CD8-positive, alpha-beta T cell (primary cell): ENCODE measurements at regions of chr1 and their contacts with region 1.

Region 1: DNA sequence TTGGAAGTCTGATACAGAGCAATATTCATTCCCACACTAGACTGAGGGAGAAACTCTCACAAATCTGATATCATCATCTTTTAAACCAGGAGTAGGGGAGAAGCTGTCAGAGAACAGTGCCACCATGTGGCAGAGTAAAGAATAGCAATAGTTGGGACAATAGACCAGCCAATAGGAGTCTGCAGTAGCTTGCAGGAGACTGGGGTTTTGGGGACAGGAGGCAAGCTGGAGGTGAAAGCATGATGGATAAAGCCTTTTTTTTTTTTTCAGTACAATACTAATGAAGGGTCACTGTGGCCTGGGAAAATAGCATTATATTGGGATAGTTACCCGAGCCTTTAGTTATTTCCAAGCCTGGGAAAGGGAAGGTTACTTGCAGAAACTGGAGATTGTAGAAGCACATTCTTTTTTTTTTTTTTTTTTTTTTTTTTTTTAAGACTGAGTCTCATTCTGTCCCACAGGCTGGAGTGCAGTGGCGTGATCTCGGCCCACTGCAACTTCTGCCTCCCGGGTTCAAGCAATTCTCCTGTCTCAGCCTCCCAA is 120.7 kb downstream of the S1PR1 start:
- DNase-seq: peak; percentile 38 to 92 (median 67)
- ATAC-seq: peak; percentile 100
- H3K4me3 ChIP-seq: no peak overlapping the region
- H3K4me3 Mint-ChIP-seq: no peak overlapping the region
- H3K27ac ChIP-seq: no peak overlapping the region
- H3K27ac Mint-ChIP-seq: peak overlapping the region; percentile 28
- H3K4me1 ChIP-seq: peaks cover 6% of the 10 kb centered on the region
- H3K4me1 Mint-ChIP-seq: peaks cover 8% of the 10 kb centered on the region
- H3K27me3 ChIP-seq: no peaks in the 10 kb centered on the region
- H3K27me3 Mint-ChIP-seq: peaks cover 3% of the 10 kb centered on the region
- CTCF ChIP-seq: peak; percentile 87

Region 2: GRCh38 chr1:100895540-100896483 is 461.7 kb before region 1 on chr1 and contains the start of gene SLC30A7:
- CTCF ChIA-PET with region 1: interaction called, 3 read pairs
- POLR2A ChIA-PET with region 1: no interaction called
- intact Hi-C with region 1: loop called in 1 of 2 experiments (anchors 1 kb)
- DNase-seq: peak; percentile 91 to 98 (median 96)
- ATAC-seq: peak; percentile 72
- H3K4me3 ChIP-seq: peak within 1 kb of the TSS; percentile 92 to 98
- H3K4me3 Mint-ChIP-seq: peak within 1 kb of the TSS; percentile 100
- H3K27ac ChIP-seq: peak within 1 kb of the TSS; percentile 85 to 99
- H3K27ac Mint-ChIP-seq: peak within 1 kb of the TSS; percentile 100
- H3K4me1 ChIP-seq: peaks cover 20% of the 10 kb centered on the region
- H3K4me1 Mint-ChIP-seq: peaks cover 49% of the 10 kb centered on the region
- H3K27me3 ChIP-seq: no peaks in the 10 kb centered on the region
- H3K27me3 Mint-ChIP-seq: no peaks in the 10 kb centered on the region
- CTCF ChIP-seq: no peak
- total RNA-seq, gene SLC30A7: 18.8 to 20.2 TPM

Region 3: DNA sequence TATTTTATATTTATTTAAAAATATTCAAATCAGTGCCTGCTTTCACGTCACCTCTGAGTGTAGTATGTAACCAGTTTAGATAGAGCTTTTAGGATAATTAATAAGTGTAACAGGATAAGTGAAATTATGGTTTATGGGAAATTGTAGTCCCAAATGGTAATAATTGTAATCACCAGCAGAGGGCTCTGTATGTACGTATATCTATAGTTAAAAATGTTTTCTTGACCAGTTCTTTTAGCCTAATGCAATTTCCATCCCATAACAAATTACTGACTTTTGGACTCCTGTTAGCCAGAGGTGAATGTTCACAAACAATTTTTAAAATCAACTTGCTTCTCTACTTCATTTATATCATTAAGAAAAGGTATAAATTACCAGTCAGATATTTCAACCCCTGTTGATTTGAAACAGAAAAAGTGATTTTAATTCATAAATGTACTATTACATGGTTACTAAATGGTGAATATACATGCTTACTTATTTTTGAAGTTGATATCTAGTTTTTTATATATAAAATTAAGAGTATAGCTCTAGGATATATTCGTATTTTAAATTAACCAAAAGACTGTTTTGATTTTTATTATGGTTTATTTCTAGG is 436.3 kb before region 1 on chr1:
- CTCF ChIA-PET with region 1: interaction called, 4 read pairs
- POLR2A ChIA-PET with region 1: no interaction called
- intact Hi-C with region 1: loop called (anchors 1 kb)
- DNase-seq: peak in 2 of 9 experiments; percentile 70 to 77
- ATAC-seq: peak; percentile 45
- H3K4me3 ChIP-seq: no peak overlapping the region
- H3K4me3 Mint-ChIP-seq: no peak overlapping the region
- H3K27ac ChIP-seq: no peak overlapping the region
- H3K27ac Mint-ChIP-seq: peak overlapping the region; percentile 63
- H3K4me1 ChIP-seq: peaks cover 37% of the 10 kb centered on the region
- H3K4me1 Mint-ChIP-seq: peaks cover 41% of the 10 kb centered on the region
- H3K27me3 ChIP-seq: no peaks in the 10 kb centered on the region
- H3K27me3 Mint-ChIP-seq: no peaks in the 10 kb centered on the region
- CTCF ChIP-seq: peak; percentile 99

Region 4: DNA sequence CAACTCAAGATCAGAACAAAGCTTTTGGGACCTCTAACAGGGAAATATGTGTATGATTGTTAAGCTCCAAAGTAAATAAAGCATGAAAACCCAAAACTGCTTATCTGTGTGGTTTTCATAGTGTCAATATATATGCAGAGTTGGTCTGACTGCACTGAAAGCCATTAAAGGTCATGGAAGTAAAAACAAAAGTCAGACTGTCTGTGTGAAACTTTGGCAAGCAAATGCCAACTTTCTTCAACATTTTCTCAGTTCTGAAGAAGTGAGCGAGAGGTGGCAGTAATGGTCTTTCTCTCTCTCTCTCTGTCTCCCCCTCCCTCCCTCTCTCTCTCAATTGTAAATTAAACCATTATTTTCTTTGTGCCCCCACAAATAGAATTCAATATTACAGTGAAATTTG is 220.8 kb before region 1 on chr1:
- CTCF ChIA-PET with region 1: interaction called, 12 read pairs
- POLR2A ChIA-PET with region 1: interaction called, 3 read pairs
- intact Hi-C with region 1: loop called (anchors 1 to 5 kb)
- DNase-seq: peak in 4 of 9 experiments; percentile 21 to 78 (median 50)
- ATAC-seq: peak; percentile 76
- H3K4me3 ChIP-seq: no peak overlapping the region
- H3K4me3 Mint-ChIP-seq: peak overlapping the region; percentile 13
- H3K27ac ChIP-seq: peak overlapping the region; percentile 12 to 50
- H3K27ac Mint-ChIP-seq: peak overlapping the region; percentile 85
- H3K4me1 ChIP-seq: peaks cover 35% of the 10 kb centered on the region
- H3K4me1 Mint-ChIP-seq: peaks cover 60% of the 10 kb centered on the region
- H3K27me3 ChIP-seq: no peaks in the 10 kb centered on the region
- H3K27me3 Mint-ChIP-seq: no peaks in the 10 kb centered on the region
- CTCF ChIP-seq: peak; percentile 58

Region 5: GRCh38 chr1:101317590-101317989 is 39.9 kb before region 1 on chr1:
- CTCF ChIA-PET with region 1: interaction called, 136 read pairs
- POLR2A ChIA-PET with region 1: interaction called, 3 read pairs
- intact Hi-C with region 1: no loop called
- DNase-seq: peak in 1 of 9 experiments; percentile 21
- ATAC-seq: no peak
- H3K4me3 ChIP-seq: no peak overlapping the region
- H3K4me3 Mint-ChIP-seq: no peak overlapping the region
- H3K27ac ChIP-seq: no peak overlapping the region
- H3K27ac Mint-ChIP-seq: no peak overlapping the region
- H3K4me1 ChIP-seq: peaks cover 10% of the 10 kb centered on the region
- H3K4me1 Mint-ChIP-seq: peaks cover 15% of the 10 kb centered on the region
- H3K27me3 ChIP-seq: no peaks in the 10 kb centered on the region
- H3K27me3 Mint-ChIP-seq: no peaks in the 10 kb centered on the region
- CTCF ChIP-seq: no peak

Region 6: DNA sequence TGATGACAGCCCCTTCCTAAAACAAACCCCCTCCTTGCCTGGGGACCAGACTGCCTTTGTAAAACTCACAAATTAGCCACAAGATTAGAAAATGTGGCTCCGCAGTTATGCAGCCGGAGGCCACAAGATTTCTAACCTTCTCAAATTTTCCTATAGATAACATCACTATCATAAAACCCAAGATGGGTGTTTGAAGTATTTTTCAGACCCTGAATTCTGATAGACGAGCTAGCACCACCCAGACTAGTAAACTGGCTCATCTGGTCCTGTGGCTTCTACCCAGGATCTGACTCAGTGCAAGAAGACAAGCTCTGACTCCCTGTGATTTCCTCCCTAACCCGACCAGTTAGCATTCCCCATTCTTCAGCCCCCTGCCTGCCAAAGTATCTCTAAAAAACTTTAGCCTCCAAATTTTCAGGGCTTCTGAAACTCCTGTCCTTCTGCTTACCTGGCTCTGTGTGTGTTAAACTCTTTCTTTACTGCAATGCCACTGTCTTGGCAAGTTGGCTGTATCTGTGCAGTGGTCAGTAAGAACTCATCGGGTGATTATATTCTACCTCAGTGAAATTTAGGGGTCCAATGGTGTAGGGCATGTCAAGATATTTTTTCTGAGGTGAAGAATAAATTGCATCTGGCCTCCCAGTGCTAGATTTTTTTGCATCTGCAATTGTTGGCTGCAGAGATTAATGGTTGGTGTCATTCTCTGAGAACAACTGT is 18.6 kb before region 1 on chr1:
- CTCF ChIA-PET with region 1: interaction called, 5 read pairs
- POLR2A ChIA-PET with region 1: interaction called, 3 read pairs
- intact Hi-C with region 1: loop called in 1 of 2 experiments (anchors 2 kb)
- DNase-seq: peak in 5 of 9 experiments; percentile 3 to 72 (median 35)
- ATAC-seq: peak; percentile 66
- H3K4me3 ChIP-seq: no peak overlapping the region
- H3K4me3 Mint-ChIP-seq: no peak overlapping the region
- H3K27ac ChIP-seq: peak overlapping the region in 1 of 2 experiments; percentile 59
- H3K27ac Mint-ChIP-seq: peak overlapping the region; percentile 16
- H3K4me1 ChIP-seq: no peaks in the 10 kb centered on the region
- H3K4me1 Mint-ChIP-seq: peaks cover 2% of the 10 kb centered on the region
- H3K27me3 ChIP-seq: no peaks in the 10 kb centered on the region
- H3K27me3 Mint-ChIP-seq: no peaks in the 10 kb centered on the region
- CTCF ChIP-seq: no peak

Region 7: DNA sequence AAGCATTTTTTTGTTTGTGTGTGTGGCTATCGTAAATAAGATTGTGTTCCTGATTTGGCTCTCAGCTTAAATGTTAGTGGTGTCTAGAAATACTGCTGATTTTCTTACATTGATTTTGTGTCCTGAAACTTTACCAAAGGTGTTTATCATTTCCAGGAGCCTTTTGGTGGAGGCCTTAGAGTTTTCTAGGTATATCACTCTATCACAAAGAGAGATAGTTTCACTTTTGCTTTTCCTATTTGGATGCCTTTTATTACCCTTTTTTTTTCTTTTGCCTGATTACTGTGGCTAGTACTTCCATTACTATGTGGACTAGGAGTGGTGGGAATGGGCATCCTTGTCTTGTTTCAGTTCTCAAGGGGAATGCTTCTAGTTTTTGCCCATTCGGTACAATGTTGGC is 11.1 kb before region 1 on chr1:
- CTCF ChIA-PET with region 1: interaction called, 10 read pairs
- POLR2A ChIA-PET with region 1: interaction called, 3 read pairs
- intact Hi-C with region 1: loop called in 1 of 2 experiments (anchors 2 kb)
- DNase-seq: peak in 1 of 9 experiments; percentile 29
- ATAC-seq: no peak
- H3K4me3 ChIP-seq: no peak overlapping the region
- H3K4me3 Mint-ChIP-seq: peak overlapping the region; percentile 77
- H3K27ac ChIP-seq: no peak overlapping the region
- H3K27ac Mint-ChIP-seq: peak overlapping the region; percentile 86
- H3K4me1 ChIP-seq: no peaks in the 10 kb centered on the region
- H3K4me1 Mint-ChIP-seq: peaks cover 39% of the 10 kb centered on the region
- H3K27me3 ChIP-seq: no peaks in the 10 kb centered on the region
- H3K27me3 Mint-ChIP-seq: no peaks in the 10 kb centered on the region
- CTCF ChIP-seq: no peak